ENCODE measurements at regions of chr14 and their contacts with region 1.

Region 1: DNA sequence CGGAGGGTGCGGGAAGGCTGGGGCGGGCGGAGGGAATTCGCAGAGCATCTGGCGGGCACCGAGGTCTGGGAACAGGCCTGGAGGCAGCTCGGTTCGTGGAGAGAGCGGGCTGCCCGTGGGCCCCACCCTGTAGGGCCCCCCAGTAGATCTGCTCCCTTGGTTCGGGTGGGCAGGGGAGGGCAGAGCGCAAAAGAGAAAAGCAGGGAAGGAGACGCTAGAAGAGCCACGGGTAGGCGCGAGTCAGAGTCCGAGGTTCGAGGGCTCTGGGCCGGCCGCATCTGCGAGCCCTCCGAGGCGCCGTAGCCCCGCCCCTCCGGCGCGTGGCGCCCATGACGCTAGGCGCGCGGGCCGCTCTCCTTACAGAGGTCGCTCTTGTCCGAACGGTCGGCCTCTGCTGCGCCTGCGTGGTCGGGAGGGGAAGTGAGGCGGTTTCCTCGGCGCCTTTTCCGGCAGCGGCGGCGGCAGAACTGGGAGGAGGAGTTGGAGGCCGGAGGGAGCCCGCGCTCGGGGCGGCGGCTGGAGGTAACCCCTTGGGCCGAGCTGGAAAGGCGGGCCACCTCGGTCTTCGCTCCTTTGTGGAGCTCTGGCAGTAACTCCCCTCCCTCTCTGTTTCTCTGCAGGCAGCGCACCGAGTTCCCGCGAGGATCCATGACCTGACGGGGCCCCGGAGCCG is at the start of gene ARF6:
- DNase-seq: peak; percentile 97
- H3K4me3 ChIP-seq: peak within 1 kb of the TSS; percentile 87 to 100 (median 96)
- H3K27ac ChIP-seq: peak within 1 kb of the TSS; percentile 94
- H3K4me1 ChIP-seq: peaks cover 11% of the 10 kb centered on the region
- H3K27me3 ChIP-seq: no peaks in the 10 kb centered on the region
- CTCF ChIP-seq: peak in 1 of 2 donors; percentile 39
- total RNA-seq, gene ARF6: 85.5 to 132 TPM

Region 2: GRCh38 chr14:49808780-49809179 is 84.0 kb before region 1 on chr14:
- CTCF ChIA-PET with region 1: no interaction called
- dilution Hi-C with region 1: no loop called
- in situ Hi-C with region 1: no loop called
- intact Hi-C with region 1: no loop called
- DNase-seq: no peak
- H3K4me3 ChIP-seq: no peak overlapping the region
- H3K27ac ChIP-seq: no peak overlapping the region
- H3K4me1 ChIP-seq: no peaks in the 10 kb centered on the region
- H3K27me3 ChIP-seq: no peaks in the 10 kb centered on the region
- CTCF ChIP-seq: no peak

Region 3: DNA sequence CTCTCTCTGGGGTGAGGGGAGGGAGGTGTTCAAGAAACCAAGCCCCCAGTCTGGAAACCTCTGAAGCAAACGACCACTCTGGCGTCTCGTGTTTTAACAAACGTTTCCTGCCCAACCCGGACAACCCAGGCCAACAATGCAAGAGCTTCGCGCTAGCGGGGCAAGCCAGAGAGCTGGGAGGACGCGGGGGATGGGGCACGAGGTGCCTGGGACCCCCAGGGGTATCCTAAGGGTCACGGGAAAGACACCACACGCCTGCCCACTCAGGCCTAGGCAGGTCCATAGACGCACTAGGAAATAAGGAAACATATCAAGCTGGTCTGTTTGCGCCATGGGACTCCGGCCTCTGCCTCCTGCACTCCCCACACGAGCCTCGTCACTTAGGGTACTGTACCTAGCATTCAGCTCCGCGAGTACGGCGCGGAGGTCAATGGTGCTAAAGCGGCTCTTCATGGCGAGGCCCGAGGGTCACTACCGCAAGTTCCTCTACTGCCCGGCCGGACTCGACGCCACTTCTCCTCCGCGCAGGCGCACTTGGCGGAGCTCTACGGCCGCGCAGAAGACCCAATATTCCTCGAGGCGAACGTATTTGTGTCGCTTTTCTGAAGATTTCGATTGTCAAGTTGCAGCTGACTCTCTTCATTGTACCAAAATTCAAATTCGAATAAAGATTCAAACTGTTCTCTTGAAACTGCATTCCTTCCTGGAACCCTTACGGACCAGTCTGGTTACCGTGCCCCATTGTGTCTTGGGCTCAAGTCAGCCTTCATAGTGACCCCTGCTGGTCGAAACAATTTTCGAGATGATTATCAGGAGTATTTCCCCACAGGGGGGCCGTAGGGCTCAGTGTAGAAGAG is 40.2 kb before region 1 on chr14 and contains the start of gene NEMF:
- CTCF ChIA-PET with region 1: no interaction called
- dilution Hi-C with region 1: no loop called
- in situ Hi-C with region 1: no loop called
- intact Hi-C with region 1: no loop called
- DNase-seq: peak; percentile 83
- H3K4me3 ChIP-seq: peak within 1 kb of the TSS; percentile 54 to 96 (median 65)
- H3K27ac ChIP-seq: peak within 1 kb of the TSS; percentile 77
- H3K4me1 ChIP-seq: peaks cover 7% of the 10 kb centered on the region
- H3K27me3 ChIP-seq: no peaks in the 10 kb centered on the region
- CTCF ChIP-seq: peak; percentile 76 to 77
- total RNA-seq, gene NEMF: 44.8 to 57.7 TPM

Region 4: GRCh38 chr14:49867831-49868723 is 24.7 kb before region 1 on chr14:
- CTCF ChIA-PET with region 1: interaction called, 9 read pairs
- dilution Hi-C with region 1: no loop called
- in situ Hi-C with region 1: no loop called
- intact Hi-C with region 1: loop called (anchors 1 kb)
- DNase-seq: peak; percentile 97
- H3K4me3 ChIP-seq: peak overlapping the region; percentile 59 to 70 (median 60)
- H3K27ac ChIP-seq: peak overlapping the region; percentile 81
- H3K4me1 ChIP-seq: peaks cover 17% of the 10 kb centered on the region
- H3K27me3 ChIP-seq: no peaks in the 10 kb centered on the region
- CTCF ChIP-seq: no peak

Region 5: DNA sequence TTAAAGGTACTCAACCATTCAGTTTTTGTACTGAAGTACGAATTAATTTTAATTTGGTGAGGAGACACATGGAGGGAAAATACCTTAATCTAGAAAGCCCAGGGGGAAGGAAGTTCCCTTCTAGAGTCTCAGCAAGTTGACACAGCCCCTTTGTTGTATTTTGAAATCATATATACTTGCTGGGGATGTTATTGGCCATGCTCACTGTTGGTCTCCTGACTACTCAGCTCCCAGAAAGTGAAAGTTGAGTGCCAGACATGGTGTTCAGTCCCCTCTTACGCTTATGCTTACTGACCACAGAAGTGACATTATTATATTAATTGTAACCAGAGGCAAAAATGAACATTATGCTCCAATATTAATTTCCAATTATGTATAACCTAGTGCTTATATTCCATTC is 28.2 kb after region 1 on chr14:
- CTCF ChIA-PET with region 1: no interaction called
- dilution Hi-C with region 1: no loop called
- in situ Hi-C with region 1: no loop called
- intact Hi-C with region 1: no loop called
- DNase-seq: no peak
- H3K4me3 ChIP-seq: no peak overlapping the region
- H3K27ac ChIP-seq: no peak overlapping the region
- H3K4me1 ChIP-seq: no peaks in the 10 kb centered on the region
- H3K27me3 ChIP-seq: no peaks in the 10 kb centered on the region
- CTCF ChIP-seq: no peak

Region 6: DNA sequence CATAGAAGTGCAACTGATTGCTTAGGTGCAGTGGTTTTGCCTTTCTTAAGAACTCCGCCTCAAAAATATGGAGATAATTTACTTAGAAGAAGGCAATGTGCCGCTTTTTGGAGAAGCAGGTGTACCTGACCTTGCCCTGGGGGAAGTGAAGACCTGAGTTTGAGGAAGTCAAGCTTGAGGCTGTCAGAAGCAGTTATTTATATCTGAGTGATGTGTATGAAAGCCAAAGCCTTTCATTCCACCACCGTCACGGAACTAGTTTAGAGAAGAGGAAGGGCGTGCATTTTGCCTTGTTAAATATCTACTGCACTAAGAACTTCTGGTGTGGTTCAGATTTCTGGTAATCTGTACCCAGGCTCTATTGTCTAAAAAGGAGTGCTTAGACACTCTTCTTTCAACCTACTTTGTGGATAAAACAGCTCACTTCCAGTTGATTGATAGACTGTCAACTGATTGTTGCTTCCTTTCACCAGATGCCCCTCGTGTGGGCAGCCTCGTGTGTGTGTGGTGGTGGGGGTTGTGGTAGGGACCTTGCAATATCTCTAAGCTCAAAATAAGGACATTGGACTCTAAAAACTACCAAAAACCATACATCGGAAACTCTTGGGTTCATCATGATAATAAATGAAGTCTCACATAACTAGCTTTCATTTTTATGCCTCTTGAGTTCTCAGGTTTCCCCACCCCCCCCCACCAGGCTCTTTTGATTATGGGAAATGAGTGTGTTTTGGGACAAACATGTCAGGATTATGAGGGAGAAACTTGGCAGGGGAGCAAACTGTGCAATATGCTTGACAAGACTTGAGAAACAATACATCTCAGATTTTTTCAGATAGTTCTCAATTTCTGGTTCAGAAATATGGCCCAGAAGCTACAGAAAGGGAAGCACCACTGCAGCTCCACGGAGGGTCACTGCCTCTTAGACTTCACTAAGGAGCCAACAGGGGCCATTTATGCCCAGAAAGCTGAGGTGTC is 78.7 kb after region 1 on chr14:
- CTCF ChIA-PET with region 1: no interaction called
- dilution Hi-C with region 1: loop called (anchors 5 kb)
- in situ Hi-C with region 1: no loop called
- intact Hi-C with region 1: no loop called
- DNase-seq: no peak
- H3K4me3 ChIP-seq: no peak overlapping the region
- H3K27ac ChIP-seq: peak overlapping the region; percentile 90
- H3K4me1 ChIP-seq: peaks cover 70% of the 10 kb centered on the region
- H3K27me3 ChIP-seq: no peaks in the 10 kb centered on the region
- CTCF ChIP-seq: no peak

Region 7: GRCh38 chr14:50038398-50039119 is 145.8 kb after region 1 on chr14:
- CTCF ChIA-PET with region 1: no interaction called
- dilution Hi-C with region 1: no loop called
- in situ Hi-C with region 1: no loop called
- intact Hi-C with region 1: loop called (anchors 1 kb)
- DNase-seq: peak; percentile 100
- H3K4me3 ChIP-seq: no peak overlapping the region
- H3K27ac ChIP-seq: peak overlapping the region; percentile 97
- H3K4me1 ChIP-seq: peaks cover 58% of the 10 kb centered on the region
- H3K27me3 ChIP-seq: no peaks in the 10 kb centered on the region
- CTCF ChIP-seq: peak; percentile 8 to 16

Region 8: DNA sequence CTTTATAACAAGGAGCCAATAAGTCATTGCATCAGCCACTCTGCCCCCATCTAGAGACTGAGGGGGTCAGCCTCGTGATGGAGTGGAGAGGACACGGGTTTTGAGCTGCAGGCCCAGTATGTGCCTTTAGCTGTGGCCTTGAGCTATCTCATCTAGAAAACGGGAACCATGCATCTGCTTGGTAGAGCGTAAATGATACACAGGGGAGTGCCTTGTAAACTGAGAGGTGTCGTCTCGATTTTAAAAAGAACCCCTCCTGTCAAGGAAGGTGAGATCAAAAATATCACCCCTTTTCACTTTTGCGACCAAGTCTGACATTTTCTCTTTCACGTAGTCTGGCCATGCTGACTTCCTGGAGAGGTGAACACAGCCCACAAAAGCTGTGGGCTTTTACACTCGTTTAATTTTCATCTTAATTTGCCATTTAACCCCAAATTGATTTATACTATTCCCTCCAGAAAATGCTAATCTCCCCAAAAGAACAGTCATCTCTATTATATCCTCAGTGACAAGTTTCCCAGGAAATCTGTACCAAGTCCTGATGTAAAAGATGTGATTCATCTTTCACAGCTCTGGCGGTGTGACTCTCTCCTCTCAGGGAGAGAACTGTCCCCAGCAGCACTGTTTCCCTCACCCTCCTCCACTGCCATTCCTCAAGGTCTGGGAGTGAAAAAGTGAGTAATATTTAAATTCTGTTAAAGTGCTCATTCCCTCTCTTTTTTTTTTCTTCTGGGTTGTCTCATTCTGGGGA is 193.0 kb after region 1 on chr14:
- CTCF ChIA-PET with region 1: no interaction called
- dilution Hi-C with region 1: no loop called
- in situ Hi-C with region 1: no loop called
- intact Hi-C with region 1: loop called (anchors 5 kb)
- DNase-seq: peak; percentile 78
- H3K4me3 ChIP-seq: no peak overlapping the region
- H3K27ac ChIP-seq: no peak overlapping the region
- H3K4me1 ChIP-seq: peaks cover 30% of the 10 kb centered on the region
- H3K27me3 ChIP-seq: no peaks in the 10 kb centered on the region
- CTCF ChIP-seq: no peak